Ascending aorta (tissue), 2 donors: ENCODE measurements at regions of chr7 and their contacts with region 1.

Region 1: DNA sequence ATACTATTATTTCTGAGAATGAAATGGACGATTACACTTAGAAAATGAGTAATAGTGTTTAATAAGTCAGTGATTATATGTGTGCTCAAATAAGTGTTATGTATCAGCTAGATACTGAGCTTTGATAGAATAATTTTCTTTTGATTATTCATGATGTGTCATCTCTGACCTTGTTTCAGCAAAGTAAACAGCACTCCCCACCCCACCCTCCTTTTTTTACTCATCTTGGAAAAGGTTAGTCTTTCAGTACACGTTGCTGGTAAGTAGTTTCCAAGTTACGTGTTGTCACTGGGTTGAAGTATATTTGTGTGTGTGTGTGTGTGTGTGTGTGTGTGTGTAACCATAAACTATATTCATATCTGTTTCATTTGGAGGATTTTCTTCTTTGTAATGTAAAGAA is 84.1 kb downstream of the GNAI1 start:
- DNase-seq: no peak
- H3K4me3 ChIP-seq: no peak overlapping the region
- H3K27ac ChIP-seq: no peak overlapping the region
- H3K4me1 ChIP-seq: no peaks in the 10 kb centered on the region
- H3K27me3 ChIP-seq: no peaks in the 10 kb centered on the region
- CTCF ChIP-seq: no peak

Region 2: GRCh38 chr7:80095545-80095944 is 123.2 kb before region 1 on chr7:
- intact Hi-C with region 1: loop called (anchors 10 kb)
- DNase-seq: no peak
- H3K4me3 ChIP-seq: no peak overlapping the region
- H3K27ac ChIP-seq: no peak overlapping the region
- H3K4me1 ChIP-seq: no peaks in the 10 kb centered on the region
- H3K27me3 ChIP-seq: no peaks in the 10 kb centered on the region
- CTCF ChIP-seq: peak in 2 of 3 experiments; percentile 34 to 52